ENCODE measurements at regions of chr10 and their contacts with region 1.

Region 1: GRCh38 chr10:10418387-10418786 is 599.3 kb upstream of the CELF2 start:
- DNase-seq: no peak
- H3K4me3 ChIP-seq: no peak overlapping the region
- H3K27ac ChIP-seq: no peak overlapping the region
- H3K4me1 ChIP-seq: no peaks in the 10 kb centered on the region
- H3K27me3 ChIP-seq: no peaks in the 10 kb centered on the region
- CTCF ChIP-seq: no peak
- POLR2A ChIP-seq: no peak

Region 2: GRCh38 chr10:10385846-10386245 is 32.5 kb before region 1 on chr10:
- intact Hi-C with region 1: no loop called
- DNase-seq: no peak
- H3K4me3 ChIP-seq: no peak overlapping the region
- H3K27ac ChIP-seq: no peak overlapping the region
- H3K4me1 ChIP-seq: no peaks in the 10 kb centered on the region
- H3K27me3 ChIP-seq: no peaks in the 10 kb centered on the region
- CTCF ChIP-seq: no peak
- POLR2A ChIP-seq: no peak

Region 3: GRCh38 chr10:11304906-11305585 is 886.7 kb after region 1 on chr10:
- intact Hi-C with region 1: loop called (anchors 5 kb)
- DNase-seq: no peak
- H3K4me3 ChIP-seq: no peak overlapping the region
- H3K27ac ChIP-seq: no peak overlapping the region
- H3K4me1 ChIP-seq: no peaks in the 10 kb centered on the region
- H3K27me3 ChIP-seq: no peaks in the 10 kb centered on the region
- CTCF ChIP-seq: no peak
- POLR2A ChIP-seq: no peak